ENCODE measurements at regions of chr18 and their contacts with region 1.

Region 1: GRCh38 chr18:29226201-29226600 is 1049.3 kb upstream of the CDH2 start:
- DNase-seq: peak; percentile 64
- H3K4me3 Mint-ChIP-seq: no peak overlapping the region
- H3K27ac Mint-ChIP-seq: no peak overlapping the region
- H3K4me1 Mint-ChIP-seq: peaks cover 17% of the 10 kb centered on the region
- H3K27me3 Mint-ChIP-seq: no peaks in the 10 kb centered on the region
- CTCF ChIP-seq: no peak

Region 2: GRCh38 chr18:29154758-29155725 is 71.2 kb before region 1 on chr18:
- CTCF ChIA-PET with region 1: no interaction called
- intact Hi-C with region 1: loop called (anchors 5 kb)
- DNase-seq: peak; percentile 78
- H3K4me3 Mint-ChIP-seq: peak overlapping the region; percentile 29
- H3K27ac Mint-ChIP-seq: peak overlapping the region; percentile 86
- H3K4me1 Mint-ChIP-seq: peaks cover 59% of the 10 kb centered on the region
- H3K27me3 Mint-ChIP-seq: no peaks in the 10 kb centered on the region
- CTCF ChIP-seq: no peak

Region 3: DNA sequence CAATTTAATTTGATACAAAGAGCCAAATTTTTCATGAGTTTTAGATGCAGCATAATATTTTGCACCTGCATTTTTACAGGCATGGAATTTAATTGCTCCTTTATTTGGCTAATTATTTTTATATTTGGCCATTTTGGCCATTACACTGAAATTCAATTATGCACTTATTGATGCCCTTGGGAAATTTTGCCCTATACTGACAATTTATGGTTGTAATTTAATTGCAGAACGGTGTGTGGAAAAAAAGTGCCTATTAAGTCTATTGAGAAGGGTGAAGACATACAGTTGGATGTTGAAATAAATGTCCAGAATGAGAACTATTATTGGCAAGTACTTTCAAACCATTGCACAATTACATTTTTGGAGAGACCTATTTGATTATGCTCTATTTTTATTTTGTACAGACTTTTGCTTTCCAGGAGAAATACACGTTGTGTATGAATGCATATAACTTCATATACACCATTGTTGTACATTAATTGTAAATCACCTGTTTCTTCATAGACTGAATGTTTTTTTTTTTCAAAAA is 270.0 kb after region 1 on chr18:
- CTCF ChIA-PET with region 1: no interaction called
- intact Hi-C with region 1: loop called (anchors 10 kb)
- DNase-seq: no peak
- H3K4me3 Mint-ChIP-seq: no peak overlapping the region
- H3K27ac Mint-ChIP-seq: no peak overlapping the region
- H3K4me1 Mint-ChIP-seq: no peaks in the 10 kb centered on the region
- H3K27me3 Mint-ChIP-seq: no peaks in the 10 kb centered on the region
- CTCF ChIP-seq: no peak